Activated naive CD4-positive, alpha-beta T cell treated with anti-CD3 and anti-CD28 coated beads for 36 hours (primary cell): ENCODE measurements at regions of chr10 and their contacts with region 1.

Region 1: GRCh38 chr10:6068422-6068821 is 6.3 kb upstream of the IL2RA start:
- DNase-seq: peak; percentile 71
- H3K4me3 Mint-ChIP-seq: peak overlapping the region; percentile 60
- H3K27ac Mint-ChIP-seq: peak overlapping the region; percentile 78
- H3K4me1 Mint-ChIP-seq: peaks cover 83% of the 10 kb centered on the region
- H3K27me3 Mint-ChIP-seq: no peaks in the 10 kb centered on the region

Region 2: GRCh38 chr10:5184987-5185775 is 883.2 kb before region 1 on chr10 and contains the start of gene AKR1C8:
- CTCF ChIA-PET with region 1: no interaction called
- intact Hi-C with region 1: no loop called
- DNase-seq: no peak
- H3K4me3 Mint-ChIP-seq: no peak within 1 kb of the TSS
- H3K27ac Mint-ChIP-seq: no peak within 1 kb of the TSS
- H3K4me1 Mint-ChIP-seq: no peaks in the 10 kb centered on the region
- H3K27me3 Mint-ChIP-seq: no peaks in the 10 kb centered on the region
- total RNA-seq, gene AKR1C8: not detected

Region 3: DNA sequence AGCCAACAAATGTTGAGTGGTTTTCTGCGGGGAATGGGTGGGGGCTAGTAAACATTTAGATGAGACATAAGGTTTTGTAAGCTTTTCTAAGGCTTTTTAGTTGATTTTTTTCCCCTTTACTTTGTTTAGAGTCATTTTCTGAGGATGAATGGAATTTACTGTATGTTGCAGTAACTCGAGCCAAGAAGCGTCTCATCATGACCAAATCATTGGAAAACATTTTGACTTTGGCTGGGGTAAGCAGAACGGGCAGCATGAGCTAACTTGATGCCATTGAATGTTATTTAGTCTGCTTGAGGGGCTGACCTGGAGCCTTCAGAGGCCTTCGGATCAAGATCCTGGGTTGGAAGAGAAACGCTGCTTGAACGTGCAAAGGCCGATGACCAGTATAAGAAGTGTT is 141.1 kb before region 1 on chr10:
- CTCF ChIA-PET with region 1: no interaction called
- intact Hi-C with region 1: no loop called
- DNase-seq: no peak
- H3K4me3 Mint-ChIP-seq: no peak overlapping the region
- H3K27ac Mint-ChIP-seq: no peak overlapping the region
- H3K4me1 Mint-ChIP-seq: no peaks in the 10 kb centered on the region
- H3K27me3 Mint-ChIP-seq: no peaks in the 10 kb centered on the region

Region 4: GRCh38 chr10:6045314-6045848 is 23.0 kb before region 1 on chr10:
- CTCF ChIA-PET with region 1: interaction called, 4 read pairs
- intact Hi-C with region 1: loop called (anchors 1 kb)
- DNase-seq: peak; percentile 69
- H3K4me3 Mint-ChIP-seq: peak overlapping the region; percentile 56
- H3K27ac Mint-ChIP-seq: peak overlapping the region; percentile 95
- H3K4me1 Mint-ChIP-seq: peaks cover 86% of the 10 kb centered on the region
- H3K27me3 Mint-ChIP-seq: no peaks in the 10 kb centered on the region

Region 5: DNA sequence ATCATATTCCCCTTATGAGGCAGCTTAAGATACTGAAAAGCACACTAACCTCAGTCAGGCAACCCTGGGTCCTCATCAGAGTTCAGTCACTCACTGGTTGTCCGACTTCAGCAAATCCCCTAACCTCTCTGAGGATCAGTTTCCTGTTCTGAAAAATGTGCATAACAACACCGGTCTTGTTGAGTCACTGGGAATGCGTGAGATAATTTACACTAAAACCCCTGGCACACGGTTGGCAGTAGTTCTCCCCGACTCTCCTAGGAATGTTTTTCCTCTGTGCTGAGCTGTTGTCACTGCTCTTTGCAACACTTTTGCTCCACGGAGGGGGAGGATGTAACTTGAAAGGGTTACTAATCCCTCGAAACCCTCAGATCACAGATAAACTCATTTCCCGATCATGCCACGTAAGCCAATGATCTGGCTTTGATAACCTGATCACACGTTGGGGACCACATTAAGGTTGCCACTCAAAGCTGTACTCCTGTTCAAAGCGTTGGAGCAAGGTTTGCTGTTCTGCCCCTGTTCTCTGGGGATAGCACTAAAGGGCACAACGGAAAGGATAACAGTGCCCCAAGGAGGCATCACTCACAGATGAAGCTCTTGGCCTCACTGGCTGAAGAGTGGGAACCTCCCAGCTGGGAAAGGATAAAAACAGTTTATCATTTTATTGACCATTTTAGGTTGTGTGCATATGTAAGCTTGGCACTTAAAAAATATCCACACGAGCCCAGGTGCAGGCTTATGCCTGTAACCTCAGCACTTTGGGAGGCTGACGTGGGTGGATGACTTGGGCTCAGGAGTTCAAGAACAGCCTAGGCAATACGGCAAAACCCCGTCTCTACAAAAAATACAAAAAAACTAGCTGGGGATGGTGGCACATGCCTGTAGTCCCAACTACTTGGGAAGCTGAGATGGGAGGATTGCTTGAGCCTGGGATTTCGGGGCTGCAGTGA is 15.4 kb after region 1 on chr10:
- CTCF ChIA-PET with region 1: interaction called, 27 read pairs
- intact Hi-C with region 1: loop called (anchors 1 kb)
- DNase-seq: peak; percentile 92
- H3K4me3 Mint-ChIP-seq: peak overlapping the region; percentile 67
- H3K27ac Mint-ChIP-seq: peak overlapping the region; percentile 90
- H3K4me1 Mint-ChIP-seq: peaks cover 61% of the 10 kb centered on the region
- H3K27me3 Mint-ChIP-seq: no peaks in the 10 kb centered on the region